Motor neuron (in vitro differentiated cells): ENCODE measurements at regions of chr14 and their contacts with region 1.

Region 1: GRCh38 chr14:65164068-65164824 is 61.9 kb upstream of the MAX start:
- ATAC-seq: peak; percentile 47 to 80 (median 69)
- H3K4me3 ChIP-seq: no peak overlapping the region
- H3K27ac ChIP-seq: no peak overlapping the region
- H3K4me1 ChIP-seq: no peaks in the 10 kb centered on the region

Region 2: GRCh38 chr14:65412032-65412846 is 248.0 kb after region 1 on chr14 and contains the start of gene FUT8:
- in situ Hi-C with region 1: loop called in 1 of 9 experiments (anchors 25 kb)
- ATAC-seq: peak; percentile 76 to 89 (median 86)
- H3K4me3 ChIP-seq: peak within 1 kb of the TSS; percentile 53 to 93 (median 73)
- H3K27ac ChIP-seq: peak within 1 kb of the TSS; percentile 52 to 75
- H3K4me1 ChIP-seq: peaks cover 0 to 7% of the 10 kb centered on the region in 2 donors
- total RNA-seq, gene FUT8: 26.4 to 68.1 (median 30.7) TPM

Region 3: GRCh38 chr14:65604936-65605335 is 440.7 kb after region 1 on chr14:
- in situ Hi-C with region 1: loop called in 1 of 9 experiments (anchors 25 kb)
- ATAC-seq: peak in 1 of 8 experiments; percentile 82
- H3K4me3 ChIP-seq: no peak overlapping the region
- H3K27ac ChIP-seq: no peak overlapping the region
- H3K4me1 ChIP-seq: no peaks in the 10 kb centered on the region

Region 4: GRCh38 chr14:65832431-65833266 is 668.4 kb after region 1 on chr14:
- in situ Hi-C with region 1: loop called in 3 of 9 experiments (anchors 25 kb)
- ATAC-seq: peak; percentile 23 to 80 (median 36)
- H3K4me3 ChIP-seq: no peak overlapping the region
- H3K27ac ChIP-seq: no peak overlapping the region
- H3K4me1 ChIP-seq: peaks cover 6% of the 10 kb centered on the region in 2 donors

Region 5: GRCh38 chr14:65958664-65959562 is 794.7 kb after region 1 on chr14:
- in situ Hi-C with region 1: loop called in 5 of 9 experiments (anchors 25 kb)
- ATAC-seq: peak; percentile 44 to 81 (median 52)
- H3K4me3 ChIP-seq: no peak overlapping the region
- H3K27ac ChIP-seq: no peak overlapping the region
- H3K4me1 ChIP-seq: peaks cover 3 to 24% of the 10 kb centered on the region in 2 donors

Region 6: DNA sequence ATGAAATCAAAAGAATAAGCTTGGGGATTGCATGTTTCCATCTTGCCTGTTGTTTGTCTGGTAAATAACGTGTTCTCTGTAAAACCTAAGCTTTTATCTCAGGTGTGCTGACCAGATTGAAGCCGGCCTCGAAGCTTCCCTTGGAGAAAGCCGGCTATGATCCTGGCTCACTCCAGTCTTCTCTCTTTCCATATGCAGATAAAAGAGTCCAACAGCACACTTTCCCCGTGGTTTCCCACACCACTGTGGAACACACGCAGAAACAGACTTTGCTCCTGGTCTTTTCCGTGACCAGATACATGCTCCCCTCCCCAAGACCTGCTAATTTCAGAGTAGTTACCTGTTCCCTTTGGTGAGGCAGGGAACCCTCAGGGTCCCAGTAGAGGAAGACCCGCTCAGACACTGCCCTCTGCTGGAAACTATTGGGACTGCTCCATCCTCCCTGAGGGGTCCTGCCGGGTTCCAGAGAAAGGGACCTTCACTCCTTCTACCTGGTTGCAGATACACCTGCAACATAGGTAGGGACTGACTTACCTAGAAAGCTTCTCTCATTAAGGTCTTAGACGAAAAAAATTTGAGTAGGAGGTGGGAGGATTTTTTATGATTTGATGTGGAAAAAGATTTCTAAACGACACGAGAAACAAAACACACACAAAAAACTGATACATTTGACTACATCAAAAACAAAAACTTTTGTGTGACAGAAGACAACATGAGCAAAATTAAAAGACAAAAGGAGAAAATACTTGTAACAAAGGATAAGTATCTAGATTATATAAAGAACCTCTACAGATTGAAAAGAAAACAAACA is 906.5 kb after region 1 on chr14:
- in situ Hi-C with region 1: loop called in 1 of 9 experiments (anchors 25 kb)
- ATAC-seq: peak; percentile 31 to 76 (median 57)
- H3K4me3 ChIP-seq: no peak overlapping the region
- H3K27ac ChIP-seq: no peak overlapping the region
- H3K4me1 ChIP-seq: peaks cover 10 to 14% of the 10 kb centered on the region in 2 donors